ENCODE measurements at regions of chr11 and their contacts with region 1.

Region 1: DNA sequence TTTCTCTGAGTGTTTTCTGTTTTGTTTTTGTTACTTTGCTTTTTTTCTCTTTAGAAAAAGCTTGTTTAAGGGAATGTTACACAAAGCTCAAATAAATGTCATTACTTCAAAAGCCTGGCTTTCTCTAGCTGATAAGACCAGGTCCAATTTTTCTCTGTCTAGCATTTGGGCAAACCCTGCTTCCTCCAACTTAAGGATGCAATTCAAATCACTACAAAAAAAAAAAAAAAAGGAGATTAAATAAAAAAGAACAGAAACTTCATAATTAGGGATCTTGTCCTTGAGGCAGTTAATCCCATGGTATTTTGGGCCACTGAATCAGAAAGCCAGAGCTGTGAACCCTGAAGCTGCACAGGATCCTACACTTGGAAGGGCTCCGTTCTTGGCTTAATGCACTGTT is 480.8 kb upstream of the KIRREL3 start:
- DNase-seq: no peak
- H3K4me3 ChIP-seq: no peak overlapping the region
- H3K27ac ChIP-seq: no peak overlapping the region
- H3K4me1 ChIP-seq: no peaks in the 10 kb centered on the region
- H3K27me3 ChIP-seq: no peaks in the 10 kb centered on the region
- CTCF ChIP-seq: no peak
- EP300 ChIP-seq: no peak
- POLR2A ChIP-seq: no peak
- RAD21 ChIP-seq: no peak

Region 2: DNA sequence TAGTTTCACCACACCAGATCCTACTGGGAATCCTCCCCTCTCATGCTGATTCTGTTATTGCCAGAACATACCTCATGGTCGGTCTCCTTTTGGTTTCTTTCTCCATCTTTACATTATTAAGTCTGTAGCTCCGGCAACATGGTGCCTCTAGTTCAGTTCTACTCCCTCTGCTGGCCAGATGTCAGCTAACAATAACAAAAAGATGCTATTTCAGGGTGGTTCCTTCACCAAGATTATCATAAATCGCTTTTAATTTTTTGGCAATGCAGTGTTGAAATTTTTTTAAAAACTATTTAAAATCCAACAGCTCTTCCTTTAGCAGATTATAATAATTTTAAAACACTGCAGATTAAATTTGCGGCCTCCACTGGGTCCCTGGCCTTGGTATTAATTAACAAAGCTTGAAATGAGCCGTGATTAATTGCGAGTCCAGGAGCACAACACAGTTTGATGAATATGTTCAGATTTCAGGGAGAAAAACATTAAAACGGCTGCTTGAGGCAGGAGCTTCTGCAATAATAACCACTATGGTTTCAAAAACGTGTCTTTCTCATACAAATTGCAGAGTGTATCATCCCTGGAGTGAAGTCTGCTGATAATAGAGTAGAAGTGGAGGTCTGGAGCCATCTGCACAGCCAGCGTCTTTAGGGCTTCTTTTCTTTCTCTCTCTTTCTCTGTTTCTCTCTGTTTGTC is 12.1 kb after region 1 on chr11:
- CTCF ChIA-PET with region 1: interaction called, 16 read pairs
- POLR2A ChIA-PET with region 1: no interaction called
- DNase-seq: no peak
- H3K4me3 ChIP-seq: no peak overlapping the region
- H3K27ac ChIP-seq: no peak overlapping the region
- H3K4me1 ChIP-seq: no peaks in the 10 kb centered on the region
- H3K27me3 ChIP-seq: no peaks in the 10 kb centered on the region
- CTCF ChIP-seq: peak in 2 of 3 experiments; percentile 47 to 57; a peak in 3 of 4 replicates
- EP300 ChIP-seq: no peak
- POLR2A ChIP-seq: no peak
- RAD21 ChIP-seq: peak; percentile 44 to 64; a peak in 3 of 4 replicates

Region 3: GRCh38 chr11:127506126-127506525 is 24.7 kb after region 1 on chr11:
- CTCF ChIA-PET with region 1: no interaction called
- POLR2A ChIA-PET with region 1: no interaction called
- DNase-seq: no peak
- H3K4me3 ChIP-seq: no peak overlapping the region
- H3K27ac ChIP-seq: no peak overlapping the region
- H3K4me1 ChIP-seq: no peaks in the 10 kb centered on the region
- H3K27me3 ChIP-seq: no peaks in the 10 kb centered on the region
- CTCF ChIP-seq: no peak
- EP300 ChIP-seq: no peak
- POLR2A ChIP-seq: no peak
- RAD21 ChIP-seq: no peak

Region 4: GRCh38 chr11:127574478-127574877 is 93.1 kb after region 1 on chr11:
- CTCF ChIA-PET with region 1: no interaction called
- POLR2A ChIA-PET with region 1: no interaction called
- DNase-seq: peak in 1 of 2 experiments; percentile 51
- H3K4me3 ChIP-seq: no peak overlapping the region
- H3K27ac ChIP-seq: no peak overlapping the region
- H3K4me1 ChIP-seq: peaks cover 0 to 8% (median 3%) of the 10 kb centered on the region in 4 experiments; a peak in 3 of 7 replicates
- H3K27me3 ChIP-seq: no peaks in the 10 kb centered on the region
- CTCF ChIP-seq: no peak
- EP300 ChIP-seq: no peak
- POLR2A ChIP-seq: no peak
- RAD21 ChIP-seq: no peak

Measured in H1 (cell line).